ENCODE measurements at regions of chr6 and their contacts with region 1.

Region 1: GRCh38 chr6:134938896-134939295 is 11.0 kb downstream of the ALDH8A1 start:
- DNase-seq: peak; percentile 50
- CTCF ChIP-seq: no peak

Region 2: GRCh38 chr6:134111062-134111677 is 827.7 kb before region 1 on chr6:
- CTCF ChIA-PET with region 1: interaction called, 47 read pairs
- POLR2A ChIA-PET with region 1: no interaction called
- DNase-seq: peak; percentile 74
- CTCF ChIP-seq: peak; percentile 89

Region 3: DNA sequence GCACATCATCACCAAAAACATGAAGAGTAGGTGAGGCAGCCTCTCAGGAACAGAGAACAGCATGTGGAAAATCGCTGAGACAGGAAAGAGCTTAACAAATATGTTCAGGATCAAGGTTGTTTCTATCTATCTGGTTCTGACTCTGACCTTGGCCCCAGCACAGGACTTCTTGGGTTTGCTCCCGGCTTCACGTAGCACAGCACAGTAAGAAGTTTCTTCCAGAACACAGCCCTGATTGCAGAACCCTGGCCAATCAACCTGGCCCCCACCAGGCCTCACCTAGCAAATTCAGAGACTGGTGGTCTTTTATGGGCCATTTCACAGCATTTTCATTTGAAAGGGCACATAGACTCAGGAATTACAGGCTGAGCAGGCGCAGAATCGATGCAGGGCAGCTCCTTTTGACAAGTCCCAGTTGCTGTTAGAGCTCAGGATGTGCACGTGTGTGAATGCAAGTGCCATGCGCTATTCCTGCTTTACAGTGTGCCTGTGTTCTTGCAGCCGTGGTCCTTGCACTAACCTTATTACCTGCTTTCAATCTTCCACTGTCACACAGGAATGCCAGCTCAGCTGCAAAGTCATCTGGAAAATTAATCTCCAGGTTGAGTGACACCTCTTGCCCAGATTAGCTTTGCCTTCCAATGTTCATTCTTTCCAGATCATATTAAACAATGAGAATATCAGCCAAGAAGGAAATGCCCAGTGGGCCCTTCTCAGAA is 786.0 kb before region 1 on chr6:
- CTCF ChIA-PET with region 1: interaction called, 50 read pairs
- POLR2A ChIA-PET with region 1: no interaction called
- DNase-seq: no peak
- CTCF ChIP-seq: no peak

Region 4: GRCh38 chr6:134174672-134175198 is 764.2 kb before region 1 on chr6:
- CTCF ChIA-PET with region 1: interaction called, 18 read pairs
- POLR2A ChIA-PET with region 1: no interaction called
- DNase-seq: peak; percentile 92
- CTCF ChIP-seq: no peak

Region 5: DNA sequence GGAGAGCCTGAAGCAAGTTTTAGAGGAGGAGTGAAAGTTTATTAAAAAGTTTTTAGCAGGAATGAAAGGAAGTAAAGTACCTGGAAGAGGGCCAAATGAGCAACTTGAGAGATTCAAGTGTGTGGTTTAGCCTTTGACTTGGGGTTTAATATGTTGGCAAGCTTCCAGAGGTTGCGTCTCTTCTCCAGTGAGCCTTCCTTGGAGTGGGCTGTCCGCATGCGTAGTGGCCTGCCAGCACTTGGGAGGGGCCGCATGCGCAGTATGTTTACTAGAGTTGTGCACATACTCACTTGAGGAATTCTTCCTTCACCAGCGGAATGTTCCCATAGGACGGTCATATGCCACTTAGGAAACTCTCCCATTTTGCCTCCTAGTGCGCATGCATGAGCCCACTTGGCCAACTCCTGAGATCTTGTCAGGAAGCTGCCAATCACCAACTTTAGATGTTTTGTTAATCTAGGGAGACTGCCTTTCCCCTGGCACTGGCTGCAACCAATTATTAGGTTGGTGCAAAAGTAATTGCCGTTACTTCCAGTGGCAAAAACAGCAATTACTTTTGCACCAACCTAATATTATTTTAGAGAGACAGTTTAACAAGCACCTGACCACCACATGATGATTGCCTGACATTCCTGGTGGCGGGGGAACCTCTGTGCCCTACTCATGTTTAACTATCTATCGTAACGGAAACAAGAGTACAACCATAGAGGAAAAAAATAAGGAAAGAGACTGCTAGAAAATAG is 224.0 kb before region 1 on chr6:
- CTCF ChIA-PET with region 1: no interaction called
- POLR2A ChIA-PET with region 1: no interaction called
- DNase-seq: no peak
- CTCF ChIP-seq: no peak

Region 6: GRCh38 chr6:134822920-134823709 is 115.8 kb before region 1 on chr6:
- CTCF ChIA-PET with region 1: interaction called, 13 read pairs
- POLR2A ChIA-PET with region 1: no interaction called
- DNase-seq: peak; percentile 65
- CTCF ChIP-seq: peak; percentile 70

Region 7: DNA sequence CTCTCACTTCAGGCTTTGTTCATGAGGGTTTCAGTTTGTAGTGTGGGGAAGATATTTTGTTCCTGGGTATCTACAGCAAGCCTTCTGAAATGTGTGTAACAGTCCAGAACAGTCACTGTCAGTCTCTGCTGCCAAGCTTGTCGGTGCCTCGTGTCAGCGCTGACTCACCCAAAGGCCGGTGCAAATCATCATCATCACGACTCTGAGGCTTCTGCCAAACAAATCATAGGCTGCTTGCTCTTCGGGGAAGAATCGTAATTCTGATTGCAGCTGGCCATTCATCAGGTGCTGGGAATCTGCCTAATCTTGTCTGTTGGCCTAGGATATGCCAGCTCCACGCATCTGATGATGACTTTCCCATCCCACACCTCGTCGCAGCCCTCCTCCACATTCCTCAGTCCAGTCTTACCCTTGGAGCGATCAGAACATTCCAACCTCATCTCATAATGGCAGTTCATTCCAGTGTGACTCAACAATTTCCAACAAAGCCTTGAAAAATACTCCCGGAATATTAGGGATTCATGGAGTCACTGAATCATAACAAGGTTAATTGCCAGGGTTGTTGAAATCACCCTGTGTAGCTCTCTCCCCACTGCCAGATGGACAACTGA is 29.9 kb before region 1 on chr6:
- CTCF ChIA-PET with region 1: no interaction called
- POLR2A ChIA-PET with region 1: no interaction called
- DNase-seq: no peak
- CTCF ChIP-seq: no peak

Region 8: GRCh38 chr6:134950482-134950881 is 11.6 kb after region 1 on chr6:
- CTCF ChIA-PET with region 1: interaction called, 41 read pairs
- POLR2A ChIA-PET with region 1: no interaction called
- DNase-seq: no peak
- CTCF ChIP-seq: no peak

Region 9: GRCh38 chr6:136582711-136583471 is 1644.0 kb after region 1 on chr6:
- CTCF ChIA-PET with region 1: no interaction called
- POLR2A ChIA-PET with region 1: no interaction called
- DNase-seq: no peak
- CTCF ChIP-seq: no peak

Measured in GM10248 (cell line).